SK-N-SH (cell line): ENCODE measurements at regions of chr1 and their contacts with region 1.

Region 1: DNA sequence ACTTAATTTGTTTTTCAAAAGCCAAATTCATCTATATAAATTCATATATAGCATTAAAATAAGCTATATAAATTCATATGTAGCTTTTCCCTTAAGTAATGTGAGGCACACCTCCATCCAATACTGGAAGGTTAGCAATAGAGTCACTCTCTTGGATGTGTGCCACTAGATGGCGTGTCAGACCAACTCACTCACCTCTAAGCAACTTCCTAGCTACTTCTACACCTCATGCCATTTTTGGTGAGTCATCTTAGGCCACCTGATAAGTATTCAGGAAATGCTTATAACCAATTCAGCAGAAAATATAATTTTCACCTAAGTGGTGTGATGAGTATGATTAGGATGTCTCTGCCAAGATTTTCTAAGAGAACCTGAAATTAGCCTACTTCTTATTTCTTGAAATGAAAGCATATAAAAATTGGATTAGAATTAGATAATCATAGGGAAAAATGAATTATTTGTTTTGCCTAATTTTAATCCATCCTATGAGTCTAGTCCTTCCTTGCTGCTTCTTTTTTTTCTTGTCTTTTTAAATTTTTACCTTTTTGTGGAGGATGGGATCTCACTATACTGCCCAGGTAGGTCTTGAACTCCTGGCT is 34.4 kb upstream of the TADA1 start:
- DNase-seq: peak; percentile 71
- H3K4me3 ChIP-seq: no peak overlapping the region; a peak in 1 of 4 replicates
- H3K27ac ChIP-seq: no peak overlapping the region
- H3K4me1 ChIP-seq: no peaks in the 10 kb centered on the region
- H3K27me3 ChIP-seq: no peaks in the 10 kb centered on the region
- CTCF ChIP-seq: peak; percentile 79
- EP300 ChIP-seq: no peak
- RAD21 ChIP-seq: peak; percentile 91

Region 2: GRCh38 chr1:166875734-166876539 is 34.6 kb before region 1 on chr1 and contains the start of gene TADA1:
- CTCF ChIA-PET with region 1: interaction called, 13 read pairs
- POLR2A ChIA-PET with region 1: no interaction called
- DNase-seq: peak; percentile 95
- H3K4me3 ChIP-seq: peak within 1 kb of the TSS; percentile 70 to 78
- H3K27ac ChIP-seq: peak within 1 kb of the TSS; percentile 78 to 94
- H3K4me1 ChIP-seq: peaks cover 4 to 5% of the 10 kb centered on the region in 2 experiments; a peak in 3 of 4 replicates
- H3K27me3 ChIP-seq: no peaks in the 10 kb centered on the region
- CTCF ChIP-seq: no peak
- EP300 ChIP-seq: no peak; a peak in 1 of 4 replicates
- RAD21 ChIP-seq: no peak; the same call in 1 of the 2 replicates
- polyA plus RNA-seq, gene TADA1: 9.3 and 13.6 TPM in 2 replicates

Region 3: GRCh38 chr1:166947398-166948043 is 37.0 kb after region 1 on chr1:
- CTCF ChIA-PET with region 1: interaction called, 16 read pairs
- POLR2A ChIA-PET with region 1: no interaction called
- DNase-seq: peak; percentile 76
- H3K4me3 ChIP-seq: peak overlapping the region; percentile 30 to 52
- H3K27ac ChIP-seq: no peak overlapping the region
- H3K4me1 ChIP-seq: peaks cover 0 to 5% of the 10 kb centered on the region in 2 experiments; a peak in 1 of 4 replicates
- H3K27me3 ChIP-seq: peaks cover 27% of the 10 kb centered on the region; the same call in 1 of the 2 replicates
- CTCF ChIP-seq: no peak
- EP300 ChIP-seq: no peak
- RAD21 ChIP-seq: no peak

Region 4: GRCh38 chr1:166988976-166989567 is 78.6 kb after region 1 on chr1 and contains the start of gene MAEL:
- CTCF ChIA-PET with region 1: interaction called, 10 read pairs
- POLR2A ChIA-PET with region 1: no interaction called
- DNase-seq: no peak
- H3K4me3 ChIP-seq: no peak within 1 kb of the TSS
- H3K27ac ChIP-seq: no peak within 1 kb of the TSS
- H3K4me1 ChIP-seq: no peaks in the 10 kb centered on the region
- H3K27me3 ChIP-seq: no peaks in the 10 kb centered on the region; the same call in 1 of the 2 replicates
- CTCF ChIP-seq: no peak
- EP300 ChIP-seq: no peak
- RAD21 ChIP-seq: no peak
- polyA plus RNA-seq, gene MAEL: not detected in 2 replicates

Region 5: GRCh38 chr1:167066333-167067122 is 156.0 kb after region 1 on chr1:
- CTCF ChIA-PET with region 1: interaction called, 769 read pairs
- POLR2A ChIA-PET with region 1: no interaction called
- DNase-seq: peak; percentile 91
- H3K4me3 ChIP-seq: peak overlapping the region; percentile 30 to 47; a peak in 3 of 4 replicates
- H3K27ac ChIP-seq: no peak overlapping the region
- H3K4me1 ChIP-seq: no peaks in the 10 kb centered on the region; a peak in 2 of 4 replicates
- H3K27me3 ChIP-seq: no peaks in the 10 kb centered on the region; the same call in 1 of the 2 replicates
- CTCF ChIP-seq: peak; percentile 94
- EP300 ChIP-seq: no peak
- RAD21 ChIP-seq: peak; percentile 96